Transverse colon (tissue), 4 donors: ENCODE measurements at regions of chr10 and their contacts with region 1.

Region 1: GRCh38 chr10:122703439-122704118 is 3.9 kb upstream of the C10orf120 start:
- DNase-seq: peak; percentile 59
- H3K4me3 ChIP-seq: no peak overlapping the region
- H3K27ac ChIP-seq: no peak overlapping the region
- H3K4me1 ChIP-seq: no peaks in the 10 kb centered on the region
- H3K27me3 ChIP-seq: peaks cover 10% of the 10 kb centered on the region
- CTCF ChIP-seq: peak; percentile 67 to 77 (median 75)
- EP300 ChIP-seq: no peak
- POLR2A ChIP-seq: no peak

Region 2: DNA sequence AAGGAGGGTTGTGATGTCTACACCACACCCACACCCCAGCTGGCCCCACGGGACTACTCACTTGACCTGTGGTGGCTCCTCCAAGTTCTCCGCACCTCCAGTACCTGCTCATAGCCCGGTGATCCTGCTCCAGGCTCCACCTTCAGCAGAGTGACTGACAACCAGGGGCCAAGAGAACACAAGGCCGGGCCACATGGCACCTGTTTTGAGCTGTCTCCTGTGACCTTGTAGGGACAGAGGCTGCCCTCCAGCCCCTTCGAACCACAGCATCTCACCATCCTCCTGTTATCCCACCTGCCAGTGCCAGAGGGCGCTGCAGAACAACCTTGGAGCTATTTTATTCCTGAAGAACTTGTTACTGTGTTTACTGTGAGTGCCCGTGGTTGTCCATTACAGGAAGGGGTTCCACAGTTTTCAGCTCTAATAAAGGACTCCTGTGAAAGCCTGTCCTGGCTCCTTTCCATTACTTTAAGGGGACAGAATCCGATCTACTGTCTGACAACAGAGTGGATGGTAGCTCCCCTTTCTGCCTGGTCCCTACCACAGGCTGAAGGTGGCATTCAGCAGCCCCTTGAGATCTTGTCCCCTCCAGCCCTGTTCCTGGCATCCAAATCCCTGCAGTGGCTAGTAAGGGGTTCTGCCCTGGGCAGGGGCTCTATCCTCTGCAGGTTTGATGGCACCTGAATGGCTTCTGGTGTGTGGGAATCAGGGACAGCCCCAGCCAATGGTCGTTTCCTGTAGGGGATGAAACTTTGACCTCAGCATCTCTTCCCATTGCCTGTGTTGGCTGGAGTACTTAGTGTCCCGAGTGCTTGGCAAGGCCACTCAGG is 54.8 kb before region 1 on chr10:
- in situ Hi-C with region 1: no loop called
- intact Hi-C with region 1: loop called (anchors 10 kb)
- DNase-seq: peak; percentile 41
- H3K4me3 ChIP-seq: no peak overlapping the region
- H3K27ac ChIP-seq: no peak overlapping the region
- H3K4me1 ChIP-seq: no peaks in the 10 kb centered on the region
- H3K27me3 ChIP-seq: peaks cover 29% of the 10 kb centered on the region
- CTCF ChIP-seq: peak; percentile 53 to 72 (median 65)
- EP300 ChIP-seq: no peak
- POLR2A ChIP-seq: no peak

Region 3: DNA sequence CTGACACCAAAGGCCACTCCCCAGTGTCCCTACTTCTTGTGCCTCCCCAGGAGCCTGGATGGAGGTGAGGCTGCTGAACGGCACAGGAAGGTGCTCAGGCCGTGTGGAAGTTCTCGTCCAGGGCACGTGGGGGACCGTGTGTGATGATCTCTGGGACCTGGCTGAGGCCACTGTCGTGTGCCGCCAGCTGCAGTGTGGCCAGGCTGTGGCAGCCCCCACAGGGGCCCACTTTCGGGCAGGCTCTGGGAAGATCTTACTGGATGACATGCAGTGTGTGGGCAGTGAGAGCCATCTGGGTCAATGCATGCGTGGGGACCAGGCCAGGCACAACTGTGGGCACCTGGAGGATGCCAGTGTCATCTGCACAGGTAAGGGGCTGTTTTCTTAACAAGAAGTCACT is 53.1 kb after region 1 on chr10:
- in situ Hi-C with region 1: no loop called
- intact Hi-C with region 1: no loop called
- DNase-seq: no peak
- H3K4me3 ChIP-seq: no peak overlapping the region
- H3K27ac ChIP-seq: no peak overlapping the region
- H3K4me1 ChIP-seq: no peaks in the 10 kb centered on the region
- H3K27me3 ChIP-seq: no peaks in the 10 kb centered on the region
- CTCF ChIP-seq: no peak
- EP300 ChIP-seq: no peak
- POLR2A ChIP-seq: no peak